CD14-positive monocyte (primary cell): ENCODE measurements at regions of chr20 and their contacts with region 1.

Region 1: GRCh38 chr20:44080646-44081267 is 106.2 kb downstream of the JPH2 start:
- DNase-seq: peak; percentile 70 to 80 (median 77)
- H3K4me3 ChIP-seq: no peak overlapping the region
- H3K4me3 Mint-ChIP-seq: no peak overlapping the region
- H3K27ac ChIP-seq: no peak overlapping the region
- H3K27ac Mint-ChIP-seq: peak overlapping the region in 1 of 7 donors; percentile 28
- H3K4me1 ChIP-seq: peaks cover 7 to 8% of the 10 kb centered on the region in 2 donors
- H3K4me1 Mint-ChIP-seq: peaks cover 9% of the 10 kb centered on the region
- H3K27me3 ChIP-seq: no peaks in the 10 kb centered on the region
- H3K27me3 Mint-ChIP-seq: peaks cover 2 to 12% (median 6%) of the 10 kb centered on the region in 3 donors
- CTCF ChIP-seq: peak; percentile 99

Region 2: GRCh38 chr20:43448748-43449535 is 631.8 kb before region 1 on chr20:
- intact Hi-C with region 1: loop called (anchors 5 kb)
- DNase-seq: peak; percentile 21 to 38 (median 37)
- H3K4me3 ChIP-seq: no peak overlapping the region
- H3K4me3 Mint-ChIP-seq: peak overlapping the region in 1 of 2 donors; percentile 26
- H3K27ac ChIP-seq: no peak overlapping the region
- H3K27ac Mint-ChIP-seq: no peak overlapping the region
- H3K4me1 ChIP-seq: no peaks in the 10 kb centered on the region
- H3K4me1 Mint-ChIP-seq: peaks cover 3% of the 10 kb centered on the region
- H3K27me3 ChIP-seq: peaks cover 6 to 12% of the 10 kb centered on the region in 2 donors
- H3K27me3 Mint-ChIP-seq: peaks cover 26 to 37% (median 30%) of the 10 kb centered on the region in 3 donors
- CTCF ChIP-seq: peak; percentile 74

Region 3: DNA sequence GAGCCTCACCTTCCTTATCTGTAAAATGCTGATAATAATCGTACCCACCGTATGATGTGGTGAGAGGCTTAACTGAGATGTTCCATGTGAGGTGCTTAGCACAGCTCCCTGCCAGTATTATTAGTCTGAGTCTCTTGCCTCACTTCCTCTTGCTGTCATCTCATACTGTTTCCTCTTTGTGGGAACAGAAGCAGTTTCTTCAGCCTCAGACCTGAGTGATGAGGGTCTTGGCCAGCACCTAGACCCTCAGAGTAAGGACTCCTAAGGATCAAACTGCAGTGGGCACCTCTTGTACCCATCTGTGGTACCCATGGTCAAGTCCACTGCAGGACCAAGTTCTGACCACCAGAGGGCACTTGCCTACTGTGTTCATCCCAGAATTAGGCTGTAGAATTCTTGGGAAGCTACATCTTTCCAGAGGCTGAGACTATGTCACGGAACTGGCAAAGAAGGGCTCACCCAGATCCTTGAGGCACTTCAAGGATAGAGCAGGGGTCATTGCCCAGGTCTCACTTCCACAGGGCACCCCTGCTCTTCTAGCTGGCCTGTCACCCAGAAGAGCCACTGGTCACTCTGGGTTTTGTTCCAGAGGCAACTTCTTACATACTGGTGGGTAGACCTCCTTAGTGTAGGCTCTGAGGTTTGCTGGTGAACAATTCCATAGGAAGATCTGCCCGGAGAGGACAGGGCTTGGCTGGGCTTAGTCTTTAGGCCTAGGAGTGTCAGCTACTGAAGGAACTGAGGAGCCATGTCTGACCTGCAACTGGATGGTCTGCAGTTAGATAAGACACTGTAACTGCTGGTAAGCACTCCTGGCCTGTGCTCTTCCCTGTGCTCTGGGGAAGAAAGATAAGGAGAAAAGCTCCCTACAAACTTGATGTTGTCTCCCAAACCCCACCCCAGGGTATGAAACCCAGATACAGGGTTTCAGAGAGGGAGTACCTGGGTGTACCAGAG is 542.6 kb before region 1 on chr20:
- intact Hi-C with region 1: loop called in 1 of 2 experiments (anchors 10 kb)
- DNase-seq: peak; percentile 8 to 50 (median 41)
- H3K4me3 ChIP-seq: no peak overlapping the region
- H3K4me3 Mint-ChIP-seq: no peak overlapping the region
- H3K27ac ChIP-seq: no peak overlapping the region
- H3K27ac Mint-ChIP-seq: peak overlapping the region in 3 of 7 donors; percentile 21 to 56 (median 54)
- H3K4me1 ChIP-seq: peaks cover 10% of the 10 kb centered on the region in 2 donors
- H3K4me1 Mint-ChIP-seq: peaks cover 14% of the 10 kb centered on the region
- H3K27me3 ChIP-seq: no peaks in the 10 kb centered on the region
- H3K27me3 Mint-ChIP-seq: no peaks in the 10 kb centered on the region
- CTCF ChIP-seq: peak; percentile 94

Region 4: DNA sequence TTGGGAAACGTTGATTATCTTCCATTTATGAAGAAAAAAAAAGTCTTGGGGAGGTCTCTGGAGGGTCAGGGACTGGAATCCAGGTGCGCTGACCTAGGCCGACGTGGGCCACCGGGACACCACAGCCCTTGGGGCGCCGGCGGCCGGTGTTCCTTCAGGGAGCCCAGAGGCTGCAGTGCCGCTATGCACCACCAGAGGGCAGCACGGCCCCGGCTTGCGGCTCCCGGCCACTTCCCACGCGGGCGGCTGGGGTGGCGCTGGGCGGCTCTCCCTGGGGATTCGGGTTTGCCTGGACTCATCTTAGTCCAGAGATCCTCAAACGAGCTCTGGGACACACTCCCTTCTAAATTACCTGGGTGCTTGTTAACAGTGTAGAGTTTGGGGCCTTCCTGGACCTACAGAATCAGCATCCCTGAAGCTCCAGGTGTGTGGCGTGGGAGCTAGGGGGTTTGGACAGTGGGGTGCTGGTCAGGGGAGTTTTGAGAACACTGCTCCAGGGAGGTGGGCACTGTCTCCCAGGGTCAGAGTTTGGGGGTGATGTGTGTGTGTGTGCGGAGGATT is 330.9 kb before region 1 on chr20:
- intact Hi-C with region 1: loop called (anchors 2 kb)
- DNase-seq: peak; percentile 50 to 70 (median 67)
- H3K4me3 ChIP-seq: no peak overlapping the region
- H3K4me3 Mint-ChIP-seq: peak overlapping the region in 1 of 2 donors; percentile 57
- H3K27ac ChIP-seq: no peak overlapping the region
- H3K27ac Mint-ChIP-seq: peak overlapping the region in 1 of 7 donors; percentile 18
- H3K4me1 ChIP-seq: peaks cover 78 to 83% of the 10 kb centered on the region in 2 donors
- H3K4me1 Mint-ChIP-seq: peaks cover 71% of the 10 kb centered on the region
- H3K27me3 ChIP-seq: peaks cover 9 to 25% of the 10 kb centered on the region in 2 donors
- H3K27me3 Mint-ChIP-seq: peaks cover 24 to 46% (median 36%) of the 10 kb centered on the region in 3 donors
- CTCF ChIP-seq: peak; percentile 99

Region 5: DNA sequence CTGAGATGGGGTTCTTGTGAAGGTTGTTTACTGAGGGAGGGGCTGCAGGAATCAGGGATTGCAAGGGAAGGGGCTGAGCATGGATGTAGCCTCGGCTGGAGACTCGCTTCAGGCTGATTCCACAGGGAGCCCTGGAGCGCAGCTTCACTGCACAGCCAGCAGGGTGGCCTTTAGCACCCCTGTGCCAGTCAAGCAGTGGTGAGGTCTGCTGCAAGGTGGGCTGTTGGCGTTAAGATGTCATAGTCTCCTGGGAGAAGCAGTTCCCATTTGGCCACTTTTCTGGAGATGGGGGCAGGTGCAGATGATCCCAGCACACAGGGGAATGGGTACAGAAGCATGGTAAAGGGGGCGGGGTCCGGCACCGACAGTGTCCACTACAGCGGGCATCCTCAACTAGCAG is 39.8 kb before region 1 on chr20:
- intact Hi-C with region 1: no loop called
- DNase-seq: no peak
- H3K4me3 ChIP-seq: no peak overlapping the region
- H3K4me3 Mint-ChIP-seq: no peak overlapping the region
- H3K27ac ChIP-seq: no peak overlapping the region
- H3K27ac Mint-ChIP-seq: no peak overlapping the region
- H3K4me1 ChIP-seq: no peaks in the 10 kb centered on the region
- H3K4me1 Mint-ChIP-seq: no peaks in the 10 kb centered on the region
- H3K27me3 ChIP-seq: peaks cover 15 to 52% of the 10 kb centered on the region in 2 donors
- H3K27me3 Mint-ChIP-seq: peaks cover 32 to 63% (median 44%) of the 10 kb centered on the region in 3 donors
- CTCF ChIP-seq: no peak

Region 6: GRCh38 chr20:44056010-44056698 is 24.6 kb before region 1 on chr20:
- intact Hi-C with region 1: loop called (anchors 1 to 2 kb)
- DNase-seq: peak; percentile 61 to 70 (median 67)
- H3K4me3 ChIP-seq: no peak overlapping the region
- H3K4me3 Mint-ChIP-seq: no peak overlapping the region
- H3K27ac ChIP-seq: no peak overlapping the region
- H3K27ac Mint-ChIP-seq: no peak overlapping the region
- H3K4me1 ChIP-seq: no peaks in the 10 kb centered on the region
- H3K4me1 Mint-ChIP-seq: peaks cover 1% of the 10 kb centered on the region
- H3K27me3 ChIP-seq: no peaks in the 10 kb centered on the region
- H3K27me3 Mint-ChIP-seq: peaks cover 4 to 9% (median 9%) of the 10 kb centered on the region in 3 donors
- CTCF ChIP-seq: peak; percentile 78